OCI-LY7 (cell line): ENCODE measurements at regions of chr17 and their contacts with region 1.

Region 1: DNA sequence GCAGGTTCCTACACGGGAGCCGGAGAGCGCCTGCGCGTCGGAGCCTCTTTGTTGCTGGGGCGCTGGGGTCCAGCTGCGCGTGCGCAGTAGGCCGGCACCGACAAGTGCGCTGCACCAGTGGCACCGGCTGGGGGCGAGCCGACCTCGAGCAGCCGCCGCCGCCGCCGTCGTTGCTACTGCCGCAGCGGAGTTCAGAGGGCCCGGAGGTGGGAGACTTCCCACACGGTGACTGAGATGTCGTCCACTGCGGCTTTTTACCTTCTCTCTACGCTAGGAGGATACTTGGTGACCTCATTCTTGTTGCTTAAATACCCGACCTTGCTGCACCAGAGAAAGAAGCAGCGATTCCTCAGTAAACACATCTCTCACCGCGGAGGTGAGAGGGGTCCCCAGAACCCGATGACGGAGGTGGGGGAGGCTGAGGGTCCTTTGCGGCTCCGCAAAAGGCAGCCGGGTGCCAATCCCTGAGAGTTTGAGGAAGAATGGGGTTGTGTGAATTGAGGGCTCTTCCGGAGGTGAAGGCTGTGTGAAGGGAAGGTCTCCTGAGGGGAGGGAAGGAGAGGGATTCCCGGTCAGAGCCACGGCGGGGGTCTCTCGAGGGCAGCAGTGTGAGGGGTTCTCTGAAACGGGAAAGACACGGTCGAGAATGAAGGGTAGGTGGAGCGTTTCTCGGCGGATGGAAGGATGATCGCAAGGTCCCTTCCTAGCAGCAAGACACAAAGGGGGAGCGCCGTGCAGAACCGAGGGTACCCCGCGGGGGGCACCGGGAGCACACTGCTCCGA is at the start of gene GDPD1:
- DNase-seq: peak; percentile 97
- H3K4me3 ChIP-seq: peak within 1 kb of the TSS; percentile 80
- H3K27ac ChIP-seq: peak within 1 kb of the TSS; percentile 69
- H3K4me1 ChIP-seq: peaks cover 15% of the 10 kb centered on the region
- CTCF ChIP-seq: peak; percentile 77
- total RNA-seq, gene GDPD1: 0.51 and 1.3 TPM in 2 replicates

Region 2: DNA sequence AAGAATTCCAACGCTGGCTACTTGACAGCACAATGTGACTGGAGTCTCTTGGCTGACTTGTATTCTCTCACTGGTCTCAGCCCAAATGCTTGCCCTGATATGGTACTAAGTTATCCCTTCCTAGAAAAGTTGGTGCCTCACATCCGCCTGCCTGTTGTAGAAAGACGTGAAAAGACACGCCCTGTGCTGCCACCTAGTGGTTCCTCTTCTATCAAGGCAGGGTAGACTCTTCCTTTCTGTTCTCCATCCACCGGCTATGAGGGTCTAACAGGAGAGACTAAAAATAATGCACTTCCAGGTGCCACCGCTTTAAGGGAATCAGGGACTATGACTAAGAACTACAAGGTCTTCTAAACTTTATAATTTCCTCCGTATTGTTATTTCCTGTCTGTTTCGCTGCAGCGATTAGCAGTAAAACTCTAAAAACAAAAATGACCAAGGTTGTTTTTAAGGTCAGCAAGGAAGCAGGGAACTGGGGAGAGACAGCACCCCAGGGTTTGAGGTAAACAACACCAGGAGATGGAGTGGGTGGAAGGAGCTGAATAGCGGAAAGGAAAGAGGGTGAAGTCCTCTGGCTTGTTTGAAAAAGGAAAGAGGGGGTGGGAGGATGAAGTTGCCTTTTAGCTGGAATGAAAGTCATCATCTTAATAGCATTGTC is 220.3 kb after region 1 on chr17:
- CTCF ChIA-PET with region 1: no interaction called
- POLR2A ChIA-PET with region 1: interaction called, 5 read pairs
- intact Hi-C with region 1: loop called (anchors 2 kb)
- DNase-seq: peak; percentile 90
- H3K4me3 ChIP-seq: no peak overlapping the region
- H3K27ac ChIP-seq: no peak overlapping the region
- H3K4me1 ChIP-seq: peaks cover 37% of the 10 kb centered on the region
- CTCF ChIP-seq: peak; percentile 95